Activated T-helper 1 cell treated with anti-CD3 and anti-CD28 coated beads, Interleukin-12 subunit alpha, Interleukin-12 subunit beta, Interleukin-2, Interleukin-4 antibody, amounts not matched to agents 30 ng/mL and 10 ng/mL and 1 ng/mL, durations not matched to agents 14 hours and 24 hours and 36 hours (primary cell): ENCODE measurements at regions of chr15 and their contacts with region 1.

Region 1: GRCh38 chr15:55221090-55222011 is 24.6 kb upstream of the RSL24D1 start:
- DNase-seq: peak; percentile 3
- H3K4me3 Mint-ChIP-seq: peak overlapping the region; percentile 63
- H3K27ac Mint-ChIP-seq: peak overlapping the region; percentile 98
- H3K4me1 Mint-ChIP-seq: peaks cover 78% of the 10 kb centered on the region
- H3K27me3 Mint-ChIP-seq: no peaks in the 10 kb centered on the region

Region 2: GRCh38 chr15:55241891-55242290 is 20.5 kb after region 1 on chr15:
- intact Hi-C with region 1: loop called (anchors 1 kb)
- DNase-seq: no peak
- H3K4me3 Mint-ChIP-seq: no peak overlapping the region
- H3K27ac Mint-ChIP-seq: peak overlapping the region; percentile 41
- H3K4me1 Mint-ChIP-seq: peaks cover 76% of the 10 kb centered on the region
- H3K27me3 Mint-ChIP-seq: no peaks in the 10 kb centered on the region

Region 3: GRCh38 chr15:55255714-55256113 is 34.4 kb after region 1 on chr15:
- intact Hi-C with region 1: loop called (anchors 2 kb)
- DNase-seq: no peak
- H3K4me3 Mint-ChIP-seq: peak overlapping the region; percentile 75
- H3K27ac Mint-ChIP-seq: peak overlapping the region; percentile 82
- H3K4me1 Mint-ChIP-seq: peaks cover 74% of the 10 kb centered on the region
- H3K27me3 Mint-ChIP-seq: no peaks in the 10 kb centered on the region

Region 4: GRCh38 chr15:55279746-55280351 is 58.5 kb after region 1 on chr15:
- intact Hi-C with region 1: loop called (anchors 1 kb)
- DNase-seq: peak; percentile 47
- H3K4me3 Mint-ChIP-seq: peak overlapping the region; percentile 57
- H3K27ac Mint-ChIP-seq: peak overlapping the region; percentile 99
- H3K4me1 Mint-ChIP-seq: peaks cover 92% of the 10 kb centered on the region
- H3K27me3 Mint-ChIP-seq: no peaks in the 10 kb centered on the region

Region 5: GRCh38 chr15:55290528-55291057 is 69.2 kb after region 1 on chr15:
- intact Hi-C with region 1: loop called (anchors 1 kb)
- DNase-seq: peak; percentile 76
- H3K4me3 Mint-ChIP-seq: peak overlapping the region; percentile 86
- H3K27ac Mint-ChIP-seq: peak overlapping the region; percentile 91
- H3K4me1 Mint-ChIP-seq: peaks cover 31% of the 10 kb centered on the region
- H3K27me3 Mint-ChIP-seq: no peaks in the 10 kb centered on the region

Region 6: DNA sequence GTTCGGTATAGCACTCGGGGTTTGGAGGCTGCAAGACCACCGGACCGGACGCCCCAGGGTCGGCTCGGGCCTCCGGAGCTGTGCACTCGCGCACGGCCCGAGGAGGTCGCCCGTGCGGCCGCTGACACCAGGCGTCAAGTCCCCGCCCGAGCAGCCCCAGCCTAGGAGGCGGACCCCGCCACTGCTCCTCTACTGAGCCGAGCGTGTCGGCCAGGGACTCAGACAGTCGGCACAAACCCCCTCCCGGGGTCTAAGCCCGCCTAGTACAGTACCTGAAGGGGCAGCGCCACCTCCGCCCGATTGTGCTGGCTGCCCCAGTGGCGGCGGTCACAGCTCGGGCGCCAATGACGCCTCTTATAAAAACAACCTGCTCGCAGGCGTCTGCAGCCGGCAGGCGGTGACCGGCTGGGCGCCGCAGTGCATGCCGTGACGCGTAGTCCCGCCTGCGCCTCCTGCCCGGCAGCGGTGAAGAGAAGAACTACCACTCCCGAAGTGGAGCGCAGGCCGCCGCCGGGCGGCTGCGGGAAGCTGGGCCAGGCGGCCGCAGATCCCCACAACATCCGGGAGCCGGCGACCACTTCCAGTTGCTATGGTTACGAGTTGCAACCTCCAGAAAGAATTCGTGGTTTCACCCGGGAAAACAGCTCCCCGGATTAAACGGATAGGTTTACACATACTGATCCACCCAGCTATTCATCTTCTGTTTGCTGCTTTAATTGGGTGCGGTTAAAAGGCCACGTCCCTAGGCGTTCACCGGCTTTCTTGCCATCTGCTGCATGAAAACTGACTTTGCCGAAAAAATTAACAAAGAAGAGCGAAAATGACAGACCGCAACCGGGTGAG is 186.8 kb after region 1 on chr15 and contains the starts of genes CCPG1 and PIERCE2:
- intact Hi-C with region 1: loop called (anchors 1 kb)
- DNase-seq: peak; percentile 89
- H3K4me3 Mint-ChIP-seq: peak within 1 kb of the TSS; percentile 98
- H3K27ac Mint-ChIP-seq: peak within 1 kb of the TSS; percentile 95
- H3K4me1 Mint-ChIP-seq: peaks cover 26% of the 10 kb centered on the region
- H3K27me3 Mint-ChIP-seq: no peaks in the 10 kb centered on the region
- total RNA-seq, gene CCPG1: 15.0 TPM in 2 replicates
- total RNA-seq, gene PIERCE2: not detected in 2 replicates

Region 7: GRCh38 chr15:55434989-55435825 is 213.9 kb after region 1 on chr15:
- intact Hi-C with region 1: loop called (anchors 1 kb)
- DNase-seq: peak; percentile 1
- H3K4me3 Mint-ChIP-seq: no peak overlapping the region
- H3K27ac Mint-ChIP-seq: no peak overlapping the region
- H3K4me1 Mint-ChIP-seq: peaks cover 11% of the 10 kb centered on the region
- H3K27me3 Mint-ChIP-seq: peaks cover 4% of the 10 kb centered on the region